ENCODE measurements at regions of chr15 and their contacts with region 1.

Region 1: DNA sequence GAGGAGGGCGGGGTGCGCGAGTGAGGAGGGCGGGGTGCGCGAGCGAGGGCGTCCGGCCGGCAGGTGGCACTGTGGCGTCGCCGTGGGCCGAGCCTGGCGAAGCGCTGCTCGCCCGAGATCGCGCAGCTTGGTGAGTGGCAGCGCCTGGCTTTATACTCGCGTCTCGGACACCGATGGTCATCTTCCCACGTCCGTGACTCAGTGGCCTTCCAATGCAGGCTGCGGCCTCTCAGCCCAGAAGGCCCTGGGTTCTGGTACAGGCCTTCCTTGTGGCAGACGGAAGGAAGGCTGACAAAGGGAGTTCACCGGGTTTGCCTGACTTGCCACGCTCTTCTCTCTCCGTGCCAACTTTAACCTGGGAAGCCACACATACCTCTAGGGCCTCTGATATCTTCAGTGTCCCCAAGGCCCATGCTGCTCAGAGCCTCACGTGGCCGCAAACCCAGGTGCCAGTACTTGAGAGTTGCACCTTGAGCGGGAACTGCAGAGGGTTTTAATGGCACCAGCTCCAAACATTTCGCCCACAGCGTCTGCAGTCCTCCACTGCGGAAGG is 195.3 kb upstream of the LYSMD4 start:
- DNase-seq: peak; percentile 86
- H3K4me3 Mint-ChIP-seq: peak overlapping the region; percentile 66
- H3K27ac Mint-ChIP-seq: no peak overlapping the region
- H3K4me1 Mint-ChIP-seq: no peaks in the 10 kb centered on the region
- H3K27me3 Mint-ChIP-seq: peaks cover 43% of the 10 kb centered on the region
- CTCF ChIP-seq: peak; percentile 73

Region 2: DNA sequence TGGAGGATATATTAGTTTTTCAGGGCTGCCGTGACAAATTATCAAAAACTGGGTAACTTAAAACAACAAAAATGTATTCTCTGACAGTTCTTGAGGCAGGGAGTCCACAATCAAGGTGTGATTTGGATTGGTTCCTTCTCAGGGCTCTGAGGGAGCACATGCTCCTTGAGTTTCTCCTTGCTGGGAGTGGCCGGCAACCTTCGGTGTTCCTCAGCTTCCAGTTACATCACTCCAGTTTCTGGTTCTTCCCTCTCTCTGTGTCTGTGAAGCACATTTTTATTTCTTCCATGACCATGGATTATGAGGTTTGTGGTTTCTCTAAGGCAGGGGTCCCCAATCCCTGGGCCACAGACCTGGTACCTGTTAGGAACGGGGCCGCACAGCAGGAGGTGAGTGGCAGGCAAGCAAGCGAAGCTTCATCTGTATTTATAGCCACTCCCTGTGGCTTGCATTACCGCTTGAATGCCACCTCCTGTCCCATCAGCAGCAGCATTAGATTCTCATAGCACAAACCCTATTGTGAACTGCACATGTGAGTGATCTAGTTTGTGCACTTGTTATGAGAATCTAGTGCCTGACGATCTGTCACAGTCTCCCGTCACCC is 652.9 kb before region 1 on chr15:
- CTCF ChIA-PET with region 1: no interaction called
- intact Hi-C with region 1: loop called (anchors 10 kb)
- DNase-seq: no peak
- H3K4me3 Mint-ChIP-seq: no peak overlapping the region
- H3K27ac Mint-ChIP-seq: no peak overlapping the region
- H3K4me1 Mint-ChIP-seq: no peaks in the 10 kb centered on the region
- H3K27me3 Mint-ChIP-seq: no peaks in the 10 kb centered on the region
- CTCF ChIP-seq: no peak

Region 3: DNA sequence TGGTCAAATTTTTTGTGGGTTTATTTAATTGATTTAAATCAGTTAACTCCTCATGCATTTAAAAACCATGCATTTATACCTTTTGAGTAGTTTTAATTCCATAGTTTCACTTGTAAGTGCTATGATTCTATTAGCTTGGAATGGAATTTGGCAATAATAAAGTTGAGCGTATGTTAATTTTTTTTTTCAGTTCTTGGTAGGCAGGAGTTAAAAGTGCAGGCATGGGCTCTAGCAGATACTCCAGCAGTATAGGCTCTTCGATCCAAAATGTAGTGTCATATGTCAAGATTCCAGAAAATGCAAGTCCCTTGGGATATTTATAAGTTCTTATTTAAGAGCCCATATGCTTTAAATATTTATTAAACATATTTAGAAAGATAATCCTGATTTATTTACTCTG is 265.6 kb before region 1 on chr15:
- CTCF ChIA-PET with region 1: no interaction called
- intact Hi-C with region 1: no loop called
- DNase-seq: no peak
- H3K4me3 Mint-ChIP-seq: no peak overlapping the region
- H3K27ac Mint-ChIP-seq: no peak overlapping the region
- H3K4me1 Mint-ChIP-seq: no peaks in the 10 kb centered on the region
- H3K27me3 Mint-ChIP-seq: no peaks in the 10 kb centered on the region
- CTCF ChIP-seq: no peak

Region 4: DNA sequence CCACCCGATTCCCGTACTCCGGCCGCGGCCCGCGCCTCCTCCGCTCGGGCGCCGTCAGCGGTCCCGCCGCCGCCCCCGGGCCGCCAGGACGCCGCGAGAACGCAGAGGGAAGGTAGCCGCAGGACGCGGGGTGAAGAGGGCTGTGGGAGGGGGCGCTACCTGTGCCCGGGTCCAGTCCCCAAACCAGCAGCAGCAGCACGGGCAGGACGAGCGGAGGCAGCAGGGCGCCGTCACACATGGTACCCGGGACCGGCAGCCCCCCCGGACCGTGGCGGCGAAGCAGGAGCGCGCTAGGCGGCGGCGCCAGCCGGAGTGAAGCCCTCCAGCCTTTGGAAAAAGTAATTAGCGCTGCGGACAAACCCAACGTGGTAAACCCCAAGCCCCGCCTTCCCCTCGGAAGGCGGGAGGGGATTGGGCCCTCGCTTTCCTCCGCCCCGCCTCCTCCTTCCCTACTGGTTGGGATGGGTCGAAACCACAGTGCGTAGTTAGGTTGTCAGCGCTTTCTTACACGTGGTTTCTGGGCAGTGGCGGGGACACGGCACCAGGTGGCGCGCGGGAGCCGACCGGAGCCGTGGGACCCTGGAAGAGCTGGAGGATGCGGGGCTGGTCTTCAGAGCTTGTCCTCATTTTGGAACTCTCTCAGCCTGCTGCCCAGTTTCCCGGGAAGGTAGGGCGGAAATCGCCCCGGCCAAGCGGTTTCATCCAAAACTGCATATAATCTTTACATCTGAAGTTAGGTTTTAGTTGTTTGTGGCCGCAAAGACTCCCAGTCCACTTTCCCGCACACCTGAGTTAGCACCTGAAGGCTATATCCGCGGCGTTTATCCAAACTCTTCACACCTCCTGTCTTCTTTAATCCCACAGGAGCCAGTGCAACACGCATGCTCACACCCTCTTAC is 413.4 kb after region 1 on chr15 and contains the start of gene ADAMTS17:
- CTCF ChIA-PET with region 1: interaction called, 7 read pairs
- intact Hi-C with region 1: loop called (anchors 2 kb)
- DNase-seq: peak; percentile 96
- H3K4me3 Mint-ChIP-seq: peak within 1 kb of the TSS; percentile 62
- H3K27ac Mint-ChIP-seq: no peak within 1 kb of the TSS
- H3K4me1 Mint-ChIP-seq: peaks cover 7% of the 10 kb centered on the region
- H3K27me3 Mint-ChIP-seq: peaks cover 75% of the 10 kb centered on the region
- CTCF ChIP-seq: peak; percentile 88
- total RNA-seq, gene ADAMTS17: 3.5 and 7.3 TPM in 2 replicates

Region 5: DNA sequence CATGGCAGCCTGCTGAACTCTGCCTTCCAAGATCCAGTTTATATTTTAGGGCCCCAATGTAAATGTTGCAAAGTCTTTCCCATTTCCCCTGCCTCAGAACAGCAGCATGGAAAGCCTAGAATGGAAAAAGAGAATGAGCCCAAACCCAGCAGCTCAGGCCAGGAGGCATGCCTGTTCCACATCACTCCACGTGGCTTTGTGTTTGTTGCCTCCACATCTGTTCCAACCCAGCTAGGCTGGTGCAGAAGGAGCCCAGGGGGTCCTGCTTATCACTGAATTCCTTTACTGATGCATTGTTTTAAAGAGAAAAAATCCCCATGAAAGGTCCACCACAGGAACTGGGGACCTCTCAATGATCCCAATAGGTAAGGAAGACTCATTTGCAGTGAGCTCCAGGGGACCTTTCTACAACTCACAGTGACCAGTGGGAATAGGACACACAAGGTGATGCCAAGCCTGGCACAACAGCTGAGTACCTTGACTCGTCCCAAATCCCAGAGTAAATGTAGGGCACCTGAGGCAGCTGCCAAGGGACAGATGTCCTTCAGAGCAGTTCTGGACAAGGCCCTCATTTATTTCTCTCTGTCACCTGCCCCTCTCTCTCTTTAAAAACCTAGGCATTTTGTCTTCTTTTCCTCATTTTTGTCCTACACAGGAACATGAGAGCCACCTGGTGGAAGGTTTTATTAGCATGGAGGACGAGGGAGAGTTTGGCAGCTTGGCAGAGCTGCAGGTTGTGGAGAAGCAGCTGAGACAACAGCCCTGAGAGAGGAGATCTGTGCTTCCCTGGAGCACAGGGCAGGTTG is 455.0 kb after region 1 on chr15:
- CTCF ChIA-PET with region 1: interaction called, 3 read pairs
- intact Hi-C with region 1: loop called (anchors 5 kb)
- DNase-seq: peak; percentile 66
- H3K4me3 Mint-ChIP-seq: no peak overlapping the region
- H3K27ac Mint-ChIP-seq: no peak overlapping the region
- H3K4me1 Mint-ChIP-seq: no peaks in the 10 kb centered on the region
- H3K27me3 Mint-ChIP-seq: peaks cover 30% of the 10 kb centered on the region
- CTCF ChIP-seq: peak; percentile 24

Region 6: GRCh38 chr15:100565591-100565990 is 637.1 kb after region 1 on chr15:
- CTCF ChIA-PET with region 1: no interaction called
- intact Hi-C with region 1: loop called (anchors 10 kb)
- DNase-seq: no peak
- H3K4me3 Mint-ChIP-seq: no peak overlapping the region
- H3K27ac Mint-ChIP-seq: no peak overlapping the region
- H3K4me1 Mint-ChIP-seq: no peaks in the 10 kb centered on the region
- H3K27me3 Mint-ChIP-seq: no peaks in the 10 kb centered on the region
- CTCF ChIP-seq: no peak

Measured in Calu3 (cell line).